HepG2 (cell line): ENCODE measurements at regions of chr14 and their contacts with region 1.

Region 1: GRCh38 chr14:69574263-69574953 is at the start of gene CCDC177:
- DNase-seq: peak; percentile 28
- ATAC-seq: peak; percentile 79
- H3K4me3 ChIP-seq: peak within 1 kb of the TSS; percentile 45 to 61 (median 46); a peak in 4 of 6 replicates
- H3K27ac ChIP-seq: no peak within 1 kb of the TSS
- H3K4me1 ChIP-seq: peaks cover 35% of the 10 kb centered on the region
- H3K27me3 ChIP-seq: peaks cover 0 to 62% of the 10 kb centered on the region in 2 experiments
- CTCF ChIP-seq: peak; percentile 85
- EP300 ChIP-seq: no peak
- POLR2A ChIP-seq: no peak
- RAD21 ChIP-seq: peak; percentile 44; the same call in 1 of the 2 replicates
- total RNA-seq, gene CCDC177: not detected in 2 replicates

Region 2: DNA sequence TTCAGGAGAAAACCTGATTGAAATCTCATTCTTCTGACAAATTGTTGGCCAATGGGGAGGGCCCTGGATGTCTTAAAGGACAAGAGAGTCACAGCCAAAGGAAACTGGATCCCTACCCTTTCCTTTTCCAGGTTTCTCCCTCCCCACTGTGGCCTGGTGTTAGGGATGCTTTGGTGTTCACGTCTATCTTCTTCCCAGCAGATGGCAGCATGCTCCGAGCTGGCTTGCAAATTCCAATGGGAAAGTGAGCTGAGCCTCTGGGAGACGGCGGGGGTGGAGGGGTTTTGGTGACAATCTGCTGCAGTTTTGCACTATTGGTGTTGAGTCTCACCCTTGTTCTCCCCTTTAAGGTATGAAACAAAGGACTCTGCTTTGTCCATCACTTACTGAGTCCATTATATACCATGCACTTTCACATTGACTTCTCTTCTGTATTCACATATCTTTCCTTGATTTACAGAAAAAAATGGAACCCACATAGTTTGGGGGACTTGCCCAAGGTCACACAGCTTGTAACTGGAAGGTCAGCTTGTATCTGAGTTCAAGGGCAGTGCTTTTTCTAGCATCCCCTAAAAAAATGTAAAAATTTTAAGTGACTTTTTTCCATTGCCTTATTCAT is 39.1 kb before region 1 on chr14:
- CTCF ChIA-PET with region 1: interaction called, 16 read pairs
- POLR2A ChIA-PET with region 1: no interaction called
- in situ Hi-C with region 1: loop called (anchors 5 kb)
- intact Hi-C with region 1: loop called (anchors 1 kb)
- DNase-seq: peak; percentile 37
- ATAC-seq: peak; percentile 85
- H3K4me3 ChIP-seq: no peak overlapping the region
- H3K27ac ChIP-seq: no peak overlapping the region
- H3K4me1 ChIP-seq: no peaks in the 10 kb centered on the region
- H3K27me3 ChIP-seq: no peaks in the 10 kb centered on the region; a peak in 1 of 5 replicates
- CTCF ChIP-seq: peak; percentile 84
- EP300 ChIP-seq: no peak
- POLR2A ChIP-seq: no peak
- RAD21 ChIP-seq: no peak

Region 3: DNA sequence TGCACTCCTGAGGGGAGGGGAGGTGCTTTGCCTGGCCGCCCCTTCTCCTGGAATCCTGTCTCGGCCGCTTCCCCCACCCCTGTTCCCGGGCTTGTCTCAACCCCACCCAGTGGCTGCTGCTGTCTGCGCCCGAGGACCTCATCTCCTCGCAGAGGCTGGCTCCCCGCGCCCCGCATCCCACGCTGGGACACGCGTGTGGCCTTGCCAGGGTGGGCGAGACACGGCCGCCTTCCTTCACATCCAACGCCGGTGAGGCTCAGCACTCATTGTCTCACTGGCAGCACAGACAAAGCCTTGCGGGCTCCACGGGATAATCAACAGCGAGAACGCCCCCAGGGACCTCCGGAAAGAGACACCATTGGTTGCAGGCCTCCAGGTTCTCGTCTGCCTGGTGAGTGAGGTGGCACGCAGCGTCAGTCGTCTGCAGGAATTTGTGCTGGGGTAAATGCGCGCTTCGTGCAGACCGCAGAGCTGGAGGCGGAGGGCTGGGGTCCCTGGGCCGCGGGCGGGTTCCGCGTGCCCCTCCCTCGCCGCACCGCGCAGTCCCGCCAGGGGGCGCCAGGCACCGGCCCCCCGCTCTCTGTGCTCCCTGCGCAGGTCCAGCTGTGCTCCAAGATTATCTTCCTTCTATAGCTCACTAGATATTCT is 26.6 kb before region 1 on chr14:
- CTCF ChIA-PET with region 1: interaction called, 5 read pairs
- POLR2A ChIA-PET with region 1: no interaction called
- in situ Hi-C with region 1: no loop called
- intact Hi-C with region 1: loop called (anchors 2 kb)
- DNase-seq: no peak
- ATAC-seq: peak; percentile 69
- H3K4me3 ChIP-seq: no peak overlapping the region
- H3K27ac ChIP-seq: no peak overlapping the region
- H3K4me1 ChIP-seq: no peaks in the 10 kb centered on the region
- H3K27me3 ChIP-seq: peaks cover 3 to 21% of the 10 kb centered on the region in 2 experiments; a peak in 4 of 5 replicates
- CTCF ChIP-seq: peak; percentile 54
- EP300 ChIP-seq: no peak
- POLR2A ChIP-seq: no peak
- RAD21 ChIP-seq: no peak; the same call in 1 of the 2 replicates